GM13976 (cell line): ENCODE measurements at regions of chr2 and their contacts with region 1.

Region 1: DNA sequence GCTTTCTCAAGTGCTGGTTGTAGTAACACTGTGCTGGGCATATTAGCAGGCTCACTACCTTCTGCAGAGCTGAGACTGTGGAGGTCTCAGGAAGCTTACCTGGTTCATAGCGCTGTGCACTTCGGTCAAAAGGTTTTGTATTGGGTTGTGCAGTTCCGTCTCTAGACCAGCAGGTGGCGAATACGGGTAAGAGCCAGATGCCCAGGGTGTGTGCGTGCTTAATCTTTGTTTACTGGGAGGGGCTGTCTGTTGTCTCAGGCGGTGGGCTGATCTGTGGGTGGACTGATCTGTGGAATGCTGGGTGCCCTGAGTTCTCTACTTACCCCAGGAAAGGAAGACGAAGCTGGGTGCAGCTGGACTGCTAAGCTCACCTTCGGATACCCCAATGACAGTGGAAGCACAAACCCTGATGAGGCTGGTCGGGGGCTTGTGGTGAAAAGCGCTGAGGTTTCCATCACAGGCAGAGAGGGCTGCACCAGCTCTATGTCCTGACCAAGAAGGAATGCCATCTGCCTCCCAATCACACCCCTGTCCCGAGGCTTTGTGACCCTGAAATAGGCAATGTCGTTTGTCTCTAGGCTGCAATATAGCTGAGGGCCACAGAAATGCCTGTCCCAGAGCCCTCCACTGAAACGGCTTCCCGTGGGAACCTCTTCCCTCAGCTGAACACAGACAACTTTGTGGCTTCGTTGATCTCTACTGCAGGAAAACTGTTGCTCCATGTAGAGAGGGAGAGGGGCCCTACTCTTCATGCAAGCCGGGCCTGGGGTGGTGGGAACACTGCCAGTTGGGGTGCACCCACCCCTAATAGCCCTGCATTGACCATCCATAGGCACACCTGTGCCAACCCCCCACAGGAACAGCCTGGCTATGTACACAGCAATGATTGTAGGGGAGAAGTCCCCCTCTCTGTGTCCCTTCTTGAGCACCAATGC is 45.9 kb upstream of the FAM117B start:
- DNase-seq: peak; percentile 78
- CTCF ChIP-seq: peak; percentile 83

Region 2: GRCh38 chr2:202436626-202437025 is 152.3 kb before region 1 on chr2:
- in situ Hi-C with region 1: no loop called
- DNase-seq: no peak
- CTCF ChIP-seq: no peak

Region 3: DNA sequence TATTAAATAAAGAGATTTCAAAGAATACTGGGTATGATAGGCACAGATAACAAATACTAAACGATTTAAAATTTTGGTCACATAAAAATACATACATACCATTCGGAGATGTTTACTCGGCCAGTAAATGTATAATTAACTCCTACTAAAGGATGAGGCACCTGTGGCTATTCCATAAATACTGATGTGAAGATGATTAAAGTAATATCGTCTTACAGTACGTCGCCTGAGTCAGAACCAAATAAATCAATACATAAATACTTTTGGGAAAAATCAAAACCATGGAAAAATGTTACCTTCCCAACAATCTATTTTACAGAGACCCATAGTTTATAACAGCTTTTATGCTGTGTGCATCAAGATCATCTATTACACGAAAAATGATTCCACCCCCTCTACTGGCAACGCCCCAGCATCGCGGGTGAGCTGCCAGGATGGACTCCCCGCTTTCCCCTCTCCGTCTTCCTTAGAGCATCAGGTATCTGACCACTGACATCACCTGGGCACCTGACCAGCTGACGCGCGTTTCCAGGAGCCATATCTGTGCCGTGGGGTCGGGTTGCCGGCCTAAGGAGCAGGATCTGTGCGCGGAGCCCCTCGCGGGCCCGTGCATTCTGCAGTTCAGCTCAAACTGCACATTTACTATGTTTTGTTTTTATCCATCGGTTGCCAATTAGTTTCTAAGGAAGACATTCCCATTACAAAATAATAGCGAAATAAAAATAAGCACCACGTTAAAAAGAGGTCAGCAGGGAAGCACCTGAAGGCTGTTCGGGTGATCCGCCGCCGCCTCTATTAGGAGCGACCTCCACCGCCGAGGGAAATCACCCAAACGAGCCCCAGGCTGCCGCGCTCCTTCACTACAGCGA is 281.8 kb after region 1 on chr2:
- in situ Hi-C with region 1: loop called (anchors 25 kb)
- DNase-seq: peak; percentile 81
- CTCF ChIP-seq: peak; percentile 68

Region 4: GRCh38 chr2:203135105-203135504 is 546.2 kb after region 1 on chr2:
- in situ Hi-C with region 1: no loop called
- DNase-seq: no peak
- CTCF ChIP-seq: no peak

Region 5: DNA sequence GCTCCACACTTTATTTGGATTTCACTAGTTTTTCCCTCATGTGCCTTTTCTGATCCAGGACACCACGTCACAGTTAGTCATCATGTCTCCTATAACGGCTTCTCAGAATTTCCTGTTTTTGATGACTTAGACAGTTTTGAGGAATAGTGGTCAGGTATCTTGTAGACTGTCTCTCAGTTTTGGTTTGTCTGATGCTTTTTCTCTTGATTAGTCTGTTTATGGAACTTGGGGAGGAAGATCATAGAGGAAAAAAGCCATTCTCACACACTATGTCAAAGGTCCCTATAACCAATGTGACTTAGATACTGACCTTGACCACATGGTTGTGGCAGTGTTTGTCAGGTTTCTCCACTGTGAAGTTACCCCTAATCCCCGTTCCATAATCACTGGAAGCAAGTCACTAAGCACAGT is 857.2 kb after region 1 on chr2:
- in situ Hi-C with region 1: loop called (anchors 25 kb)
- DNase-seq: no peak
- CTCF ChIP-seq: no peak

Region 6: DNA sequence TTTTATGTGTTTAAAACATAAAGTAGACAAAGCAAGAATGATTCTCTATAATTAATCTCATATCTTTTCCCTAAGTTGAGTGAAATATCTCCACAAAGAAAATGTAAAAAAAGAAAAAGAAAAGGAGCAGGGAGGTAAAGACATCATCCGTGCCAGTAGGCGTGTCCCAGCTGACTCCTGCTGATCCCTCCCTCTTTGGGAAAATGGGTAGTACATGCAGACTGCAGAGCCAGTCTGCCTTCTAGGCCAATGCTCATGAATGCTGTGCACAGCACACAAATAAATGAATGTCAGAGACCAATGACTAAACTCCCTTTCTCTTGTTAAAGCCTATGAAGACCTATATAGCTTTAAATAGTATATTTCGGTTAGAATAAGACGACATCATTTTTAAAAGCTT is 881.5 kb after region 1 on chr2:
- in situ Hi-C with region 1: no loop called
- DNase-seq: no peak
- CTCF ChIP-seq: no peak